Naive thymus-derived CD4-positive, alpha-beta T cell (primary cell): ENCODE measurements at regions of chr5 and their contacts with region 1.

Region 1: DNA sequence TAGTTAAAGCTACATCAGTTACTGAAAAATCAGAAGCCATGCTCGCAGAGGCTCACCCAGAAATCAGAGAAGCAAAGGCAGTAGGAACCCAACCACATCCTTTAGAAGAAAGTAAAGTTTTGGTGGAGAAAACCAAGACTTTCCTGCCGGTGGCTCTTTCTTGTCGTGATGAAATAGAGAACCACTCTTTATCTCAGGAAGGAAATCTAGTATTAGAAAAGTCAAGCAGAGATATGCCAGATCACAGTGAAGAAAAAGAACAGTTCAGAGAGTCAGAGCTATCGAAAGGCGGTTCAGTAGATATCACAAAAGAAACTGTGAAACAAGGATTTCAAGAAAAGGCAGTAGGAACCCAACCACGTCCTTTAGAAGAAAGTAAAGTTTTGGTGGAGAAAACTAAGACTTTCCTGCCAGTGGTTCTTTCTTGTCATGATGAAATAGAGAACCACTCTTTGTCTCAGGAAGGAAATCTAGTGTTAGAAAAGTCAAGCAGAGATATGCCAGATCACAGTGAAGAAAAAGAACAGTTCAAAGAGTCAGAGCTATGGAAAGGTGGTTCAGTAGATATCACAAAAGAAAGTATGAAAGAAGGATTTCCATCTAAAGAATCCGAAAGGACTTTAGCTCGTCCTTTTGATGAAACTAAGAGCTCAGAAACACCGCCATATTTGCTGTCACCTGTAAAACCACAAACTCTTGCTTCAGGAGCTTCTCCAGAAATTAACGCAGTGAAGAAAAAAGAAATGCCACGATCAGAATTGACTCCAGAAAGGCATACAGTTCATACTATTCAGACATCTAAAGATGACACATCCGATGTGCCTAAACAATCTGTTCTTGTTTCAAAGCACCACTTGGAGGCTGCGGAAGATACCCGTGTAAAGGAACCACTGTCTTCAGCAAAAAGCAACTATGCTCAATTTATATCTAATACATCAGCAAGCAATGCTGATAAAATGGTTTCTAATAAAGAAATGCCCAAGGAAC is 47.2 kb downstream of the CMYA5 start:
- DNase-seq: peak in 7 of 9 donors; percentile 35 to 75 (median 71)
- ATAC-seq: peak; percentile 85
- H3K4me3 ChIP-seq: peak overlapping the region; percentile 25
- H3K4me3 Mint-ChIP-seq: peak overlapping the region; percentile 38 to 80 (median 71)
- H3K27ac ChIP-seq: no peak overlapping the region
- H3K27ac Mint-ChIP-seq: peak overlapping the region; percentile 0 to 71 (median 38)
- H3K4me1 ChIP-seq: peaks cover 0 to 46% of the 10 kb centered on the region in 2 donors
- H3K4me1 Mint-ChIP-seq: peaks cover 40 to 78% (median 70%) of the 10 kb centered on the region in 7 donors
- H3K27me3 ChIP-seq: no peaks in the 10 kb centered on the region
- H3K27me3 Mint-ChIP-seq: peaks cover 0 to 71% (median 39%) of the 10 kb centered on the region in 5 donors

Region 2: GRCh38 chr5:79716839-79717238 is 20.0 kb before region 1 on chr5:
- CTCF ChIA-PET with region 1: no interaction called
- POLR2A ChIA-PET with region 1: no interaction called
- intact Hi-C with region 1: loop called in 1 of 2 experiments (anchors 2 kb)
- DNase-seq: no peak
- ATAC-seq: no peak
- H3K4me3 ChIP-seq: no peak overlapping the region
- H3K4me3 Mint-ChIP-seq: no peak overlapping the region
- H3K27ac ChIP-seq: no peak overlapping the region
- H3K27ac Mint-ChIP-seq: no peak overlapping the region
- H3K4me1 ChIP-seq: no peaks in the 10 kb centered on the region
- H3K4me1 Mint-ChIP-seq: no peaks in the 10 kb centered on the region
- H3K27me3 ChIP-seq: no peaks in the 10 kb centered on the region
- H3K27me3 Mint-ChIP-seq: peaks cover 0 to 13% (median 0%) of the 10 kb centered on the region in 5 donors